Head of caudate nucleus (tissue), 42 donors: ENCODE measurements at regions of chr12 and their contacts with region 1.

Region 1: GRCh38 chr12:104358347-104359003 is 54.9 kb downstream of the EID3 start:
- DNase-seq: peak in 36 of 42 donors; percentile 28 to 84 (median 62)

Region 2: DNA sequence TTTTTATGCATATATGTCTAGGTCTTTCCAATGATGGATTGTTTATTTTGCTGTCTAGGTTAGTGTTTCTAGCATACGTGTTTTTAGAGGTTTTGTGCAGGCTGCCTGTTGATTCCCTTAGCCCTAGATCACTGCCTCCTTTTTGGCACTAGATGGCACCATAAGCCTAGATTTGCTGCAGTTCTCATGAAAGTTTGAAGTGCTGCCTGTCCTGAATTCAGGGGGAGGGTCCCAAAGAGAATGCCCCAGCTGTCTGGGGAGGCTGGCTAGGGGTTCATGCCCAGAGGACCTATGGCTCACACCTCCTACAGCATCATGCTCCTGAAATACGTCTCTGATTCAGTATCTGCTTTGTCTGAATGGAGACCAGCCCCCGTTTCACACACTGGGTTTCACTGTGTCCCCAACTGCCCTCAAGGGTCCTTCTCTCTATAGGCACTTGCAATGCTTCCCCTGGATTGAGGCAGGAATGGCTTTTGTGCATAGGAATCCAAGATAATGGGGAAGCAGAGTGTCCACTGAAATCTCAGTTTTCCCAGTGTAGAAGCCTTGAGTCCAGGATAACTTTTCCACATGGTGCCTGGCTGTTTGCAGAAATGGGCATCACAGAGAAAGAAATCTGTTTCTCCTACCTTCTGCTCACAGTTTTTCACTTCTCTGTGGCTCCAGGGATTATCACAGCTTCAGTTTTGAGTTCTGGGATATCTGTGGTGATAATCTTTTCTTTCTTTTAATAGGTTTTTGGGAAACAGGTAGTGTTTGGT is 157.1 kb before region 1 on chr12:
- intact Hi-C with region 1: loop called (anchors 10 kb)
- DNase-seq: peak in 28 of 42 donors; percentile 24 to 74 (median 46)

Region 3: DNA sequence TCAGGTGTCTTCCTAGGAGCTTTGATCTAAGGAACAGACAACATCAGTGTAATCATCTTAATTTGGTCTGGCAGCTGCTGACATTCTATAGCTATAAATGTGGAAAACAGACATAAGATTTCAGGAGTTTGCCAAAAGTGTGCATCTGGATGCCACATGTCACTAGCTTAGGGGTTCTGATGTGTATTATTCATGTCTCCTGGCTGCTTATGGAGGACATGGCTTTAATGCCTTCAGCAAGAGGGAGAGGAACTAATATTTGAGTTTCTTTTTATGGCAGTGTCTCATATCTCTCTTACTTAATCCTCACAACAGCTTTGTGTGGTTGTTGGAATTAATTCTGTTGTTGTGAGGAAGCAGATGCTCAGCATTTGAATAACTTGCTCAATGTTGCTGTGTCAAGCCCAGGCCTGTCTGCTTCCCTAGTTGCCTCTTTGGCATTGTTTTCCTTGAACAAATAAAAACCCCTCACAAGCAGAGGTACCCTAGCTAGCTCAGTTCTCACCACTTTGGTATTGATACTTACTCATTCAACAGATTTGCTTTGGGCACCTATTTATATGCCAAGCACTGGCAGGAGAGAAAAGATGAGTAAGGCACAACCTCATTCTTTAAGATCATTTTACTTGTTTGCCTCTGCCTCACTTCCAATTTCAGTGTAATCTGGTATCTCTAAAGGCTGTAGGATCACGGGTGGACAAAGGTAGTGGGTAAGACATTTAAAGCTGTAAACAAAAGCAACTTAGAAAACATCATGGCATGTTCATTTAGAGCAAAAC is 94.7 kb before region 1 on chr12:
- intact Hi-C with region 1: no loop called
- DNase-seq: no peak